ENCODE measurements at regions of chr13 and their contacts with region 1.

Region 1: DNA sequence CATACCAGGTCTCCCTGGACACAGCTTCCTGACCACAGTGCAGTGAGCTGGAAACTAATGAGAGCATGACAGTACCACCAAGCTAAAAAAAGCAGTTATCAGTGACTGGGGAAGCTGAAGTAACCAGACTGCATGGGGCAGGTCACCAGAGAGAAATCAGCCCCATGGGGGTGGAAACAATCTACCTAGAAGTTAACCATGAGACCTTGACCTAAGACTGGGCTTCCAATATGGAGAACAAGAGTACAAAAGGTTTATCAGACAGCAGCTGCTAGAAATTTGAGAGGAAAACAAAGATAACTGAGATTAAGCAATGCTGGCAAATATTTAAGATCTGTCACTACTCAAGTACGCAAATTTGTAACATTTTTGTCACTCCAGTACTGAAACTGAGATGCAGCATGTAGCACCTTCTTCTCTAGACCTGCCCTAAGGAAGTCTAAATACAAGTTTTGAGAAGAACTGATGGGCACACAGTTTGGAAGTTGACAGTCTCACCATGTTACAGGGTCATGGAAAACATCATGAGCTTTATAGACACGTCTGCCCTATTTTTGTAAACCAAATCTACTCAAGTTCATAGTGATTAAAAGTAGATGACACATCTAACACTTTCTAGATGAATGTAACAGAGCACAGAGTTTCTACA is 2641.8 kb upstream of the PCDH20 start:
- DNase-seq: no peak
- ATAC-seq: peak; percentile 74
- H3K4me3 ChIP-seq: no peak overlapping the region
- H3K27ac ChIP-seq: no peak overlapping the region
- H3K4me1 ChIP-seq: no peaks in the 10 kb centered on the region
- H3K27me3 ChIP-seq: no peaks in the 10 kb centered on the region
- CTCF ChIP-seq: no peak
- EP300 ChIP-seq: 0 out of 4 replicates have a peak, but pooled peaks of 1 of the 2 experiments have one; percentile 8
- POLR2A ChIP-seq: no peak
- RAD21 ChIP-seq: no peak

Region 2: GRCh38 chr13:64069892-64070291 is 12.4 kb after region 1 on chr13:
- CTCF ChIA-PET with region 1: interaction called, 3 read pairs
- POLR2A ChIA-PET with region 1: no interaction called
- RAD21 ChIA-PET with region 1: interaction called, 4 read pairs
- SMC1A ChIA-PET with region 1: interaction called, 11 read pairs
- in situ Hi-C with region 1: no loop called
- intact Hi-C with region 1: no loop called
- DNase-seq: no peak
- ATAC-seq: no peak; the same call in 2 of the 3 replicates
- H3K4me3 ChIP-seq: no peak overlapping the region
- H3K27ac ChIP-seq: no peak overlapping the region
- H3K4me1 ChIP-seq: no peaks in the 10 kb centered on the region
- H3K27me3 ChIP-seq: no peaks in the 10 kb centered on the region
- CTCF ChIP-seq: no peak
- EP300 ChIP-seq: no peak
- POLR2A ChIP-seq: no peak
- RAD21 ChIP-seq: no peak

Region 3: GRCh38 chr13:64278493-64278892 is 221.0 kb after region 1 on chr13:
- CTCF ChIA-PET with region 1: no interaction called
- POLR2A ChIA-PET with region 1: no interaction called
- RAD21 ChIA-PET with region 1: no interaction called
- SMC1A ChIA-PET with region 1: no interaction called
- in situ Hi-C with region 1: no loop called
- intact Hi-C with region 1: no loop called
- DNase-seq: no peak
- ATAC-seq: no peak
- H3K4me3 ChIP-seq: no peak overlapping the region
- H3K27ac ChIP-seq: no peak overlapping the region
- H3K4me1 ChIP-seq: no peaks in the 10 kb centered on the region
- H3K27me3 ChIP-seq: no peaks in the 10 kb centered on the region
- CTCF ChIP-seq: no peak
- EP300 ChIP-seq: no peak
- POLR2A ChIP-seq: no peak
- RAD21 ChIP-seq: no peak

Measured in GM12878 (cell line).